GM12878 (cell line): ENCODE measurements at regions of chr7 and their contacts with region 1.

Region 1: GRCh38 chr7:32495298-32496176 is at the start of gene AVL9:
- DNase-seq: peak; percentile 75
- ATAC-seq: peak; percentile 98
- H3K4me3 ChIP-seq: peak within 1 kb of the TSS; percentile 96
- H3K27ac ChIP-seq: peak within 1 kb of the TSS; percentile 88
- H3K4me1 ChIP-seq: no peaks in the 10 kb centered on the region
- H3K27me3 ChIP-seq: no peaks in the 10 kb centered on the region
- CTCF ChIP-seq: no peak
- EP300 ChIP-seq: no peak
- POLR2A ChIP-seq: peak; percentile 99
- RAD21 ChIP-seq: no peak
- polyA plus RNA-seq, gene AVL9: 4.5 to 10.5 TPM

Region 2: GRCh38 chr7:32891800-32892520 is 396.4 kb after region 1 on chr7:
- CTCF ChIA-PET with region 1: no interaction called
- POLR2A ChIA-PET with region 1: interaction called, 3 read pairs
- RAD21 ChIA-PET with region 1: no interaction called
- SMC1A ChIA-PET with region 1: interaction called, 3 read pairs
- in situ Hi-C with region 1: no loop called
- intact Hi-C with region 1: loop called (anchors 10 kb)
- DNase-seq: peak; percentile 84
- ATAC-seq: peak; percentile 82
- H3K4me3 ChIP-seq: peak overlapping the region; percentile 62
- H3K27ac ChIP-seq: peak overlapping the region; percentile 99
- H3K4me1 ChIP-seq: peaks cover 10% of the 10 kb centered on the region; the same call in 1 of the 2 replicates
- H3K27me3 ChIP-seq: no peaks in the 10 kb centered on the region
- CTCF ChIP-seq: no peak
- EP300 ChIP-seq: no peak
- POLR2A ChIP-seq: peak; percentile 47
- RAD21 ChIP-seq: no peak